ENCODE measurements at regions of chr17 and their contacts with region 1.

Region 1: DNA sequence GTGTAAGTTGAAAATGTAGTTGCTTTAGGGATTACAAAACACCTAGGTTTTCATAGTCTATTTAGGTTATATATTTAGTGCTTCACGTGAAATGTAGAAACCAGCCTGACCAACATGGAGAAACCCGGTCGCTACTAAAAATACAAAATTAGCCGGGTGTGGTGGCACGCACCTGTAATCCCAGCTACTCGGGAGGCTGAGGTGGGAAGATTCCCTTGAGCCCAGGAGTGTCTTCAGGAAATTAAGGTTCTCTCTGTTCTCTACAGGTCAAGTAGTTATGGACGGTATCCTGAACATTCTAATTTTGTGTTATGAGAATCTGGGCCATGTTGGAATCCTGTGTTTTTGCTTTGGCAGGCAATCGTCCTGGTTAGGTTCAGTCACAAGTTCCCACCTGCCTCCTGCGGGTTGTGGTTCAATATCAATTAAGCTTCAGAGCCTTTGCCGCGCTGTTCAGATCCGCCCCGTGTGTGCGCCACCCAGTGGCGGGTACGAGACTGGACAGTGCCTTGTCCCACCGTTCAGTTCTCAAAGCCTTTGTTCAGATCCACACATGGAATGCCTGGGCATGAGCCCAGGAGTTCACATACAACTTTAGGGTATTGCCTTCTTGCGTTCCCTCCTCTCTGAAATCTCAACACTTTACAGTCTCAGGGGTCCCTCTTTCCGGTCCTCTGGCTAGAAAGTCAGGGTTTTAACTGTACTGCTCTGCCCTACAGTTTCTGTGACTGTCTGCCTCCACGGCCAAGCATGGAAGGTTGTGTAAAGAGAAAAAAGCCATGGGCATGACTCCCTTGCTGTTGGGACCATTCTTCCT is 41.7 kb downstream of the HEATR6 start:
- DNase-seq: peak in 9 of 10 donors; percentile 42 to 76 (median 57)
- H3K4me3 ChIP-seq: peak overlapping the region in 19 of 59 donors; percentile 2 to 38 (median 23)
- H3K27ac ChIP-seq: no peak overlapping the region
- H3K27me3 ChIP-seq: peaks cover 0 to 7% (median 0%) of the 10 kb centered on the region in 45 donors
- CTCF ChIP-seq: peak; percentile 49 to 92 (median 84)

Region 2: GRCh38 chr17:59753522-59754467 is 283.2 kb before region 1 on chr17:
- intact Hi-C with region 1: loop called in 1 of 2 experiments (anchors 5 kb)
- DNase-seq: no peak
- H3K4me3 ChIP-seq: peak overlapping the region in 29 of 59 donors; percentile 1 to 50 (median 14)
- H3K27ac ChIP-seq: peak overlapping the region in 24 of 59 donors; percentile 1 to 66 (median 32)
- H3K27me3 ChIP-seq: no peaks in the 10 kb centered on the region
- CTCF ChIP-seq: peak; percentile 68 to 93 (median 82)

Region 3: DNA sequence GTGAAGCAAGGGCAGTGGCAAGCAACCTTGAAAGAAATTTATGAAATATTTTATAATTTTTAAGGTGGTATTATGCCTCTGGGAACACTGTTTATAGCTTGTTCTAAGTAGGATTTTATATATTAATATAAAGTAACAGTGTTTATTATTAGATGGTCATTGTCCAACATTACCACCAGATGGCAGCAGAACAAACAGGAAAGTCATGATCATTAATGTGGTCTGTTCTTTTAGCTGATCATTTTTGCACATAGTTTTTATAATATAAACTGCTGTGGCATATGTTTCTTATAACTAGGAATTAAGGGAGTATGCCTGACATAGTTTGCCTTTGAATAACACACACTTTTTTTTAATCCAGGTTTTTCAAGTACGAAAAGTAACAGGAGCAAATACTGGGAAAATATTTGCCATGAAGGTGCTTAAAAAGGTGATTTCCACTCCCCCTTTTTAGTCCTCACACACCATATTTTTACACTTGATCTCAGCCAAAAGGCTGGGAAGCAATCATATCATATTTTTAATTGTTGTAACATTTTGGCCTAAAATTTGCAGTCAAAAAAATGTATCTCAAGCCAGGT is 122.6 kb before region 1 on chr17:
- intact Hi-C with region 1: loop called (anchors 5 to 10 kb)
- DNase-seq: no peak
- H3K4me3 ChIP-seq: no peak overlapping the region
- H3K27ac ChIP-seq: no peak overlapping the region
- H3K27me3 ChIP-seq: no peaks in the 10 kb centered on the region
- CTCF ChIP-seq: peak; percentile 58 to 89 (median 76)

Measured in dorsolateral prefrontal cortex (tissue), 120 donors.